Tibial artery (tissue), 4 donors: ENCODE measurements at regions of chr2 and their contacts with region 1.

Region 1: DNA sequence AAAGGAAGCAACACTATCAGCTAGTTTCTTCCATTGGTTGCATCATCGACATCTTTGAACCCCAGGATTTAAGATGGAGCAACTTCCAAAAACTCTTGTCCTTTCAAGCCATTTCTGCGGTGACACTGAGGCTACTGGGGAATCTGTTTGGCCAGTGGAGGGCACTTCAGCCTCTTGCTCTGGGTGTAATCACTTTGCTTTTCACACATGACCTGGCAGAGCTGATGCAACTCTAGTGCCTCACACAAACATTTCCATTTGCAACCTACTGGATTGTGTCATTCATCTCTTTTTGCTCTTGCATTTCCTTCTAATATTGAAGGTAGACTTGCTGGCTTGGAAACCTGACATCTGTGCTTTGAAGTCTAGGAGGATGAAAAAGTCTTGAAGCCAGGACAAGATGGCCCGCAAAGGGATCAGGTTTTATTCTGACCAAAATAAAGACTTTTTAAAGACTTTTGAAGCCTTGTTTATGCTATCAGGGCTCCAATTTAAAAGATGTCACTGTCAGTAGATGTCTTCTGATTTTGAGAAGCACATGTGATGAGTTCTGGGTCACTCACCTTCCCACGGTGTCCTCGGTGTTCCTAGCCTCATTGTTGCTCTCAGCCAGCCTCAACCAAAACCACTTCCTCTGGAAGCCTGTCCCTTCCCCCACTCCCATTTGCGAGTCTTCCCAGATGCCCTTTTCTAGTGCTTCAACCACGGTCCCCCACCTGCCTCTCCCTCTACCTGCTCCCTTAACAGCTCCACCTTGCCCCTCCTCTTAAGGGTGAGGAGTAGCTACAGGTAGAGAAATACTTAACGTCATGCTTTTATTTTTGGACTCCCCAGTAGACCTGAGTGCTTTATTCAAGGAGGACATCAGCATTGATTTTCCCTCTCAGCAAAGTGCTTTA is 69.7 kb upstream of the KCNE4 start:
- DNase-seq: peak; percentile 72 to 85
- H3K4me3 ChIP-seq: no peak overlapping the region
- H3K27ac ChIP-seq: peak overlapping the region in 1 of 2 donors; percentile 20
- H3K4me1 ChIP-seq: peaks cover 0 to 34% (median 10%) of the 10 kb centered on the region in 4 donors
- H3K27me3 ChIP-seq: no peaks in the 10 kb centered on the region
- CTCF ChIP-seq: peak; percentile 63 to 72

Region 2: GRCh38 chr2:221731443-221732145 is 1250.7 kb before region 1 on chr2:
- intact Hi-C with region 1: no loop called
- DNase-seq: no peak
- H3K4me3 ChIP-seq: no peak overlapping the region
- H3K27ac ChIP-seq: no peak overlapping the region
- H3K4me1 ChIP-seq: no peaks in the 10 kb centered on the region
- H3K27me3 ChIP-seq: no peaks in the 10 kb centered on the region
- CTCF ChIP-seq: no peak

Region 3: GRCh38 chr2:222494104-222494739 is 488.0 kb before region 1 on chr2:
- intact Hi-C with region 1: no loop called
- DNase-seq: no peak
- H3K4me3 ChIP-seq: no peak overlapping the region
- H3K27ac ChIP-seq: no peak overlapping the region
- H3K4me1 ChIP-seq: no peaks in the 10 kb centered on the region
- H3K27me3 ChIP-seq: no peaks in the 10 kb centered on the region
- CTCF ChIP-seq: no peak

Region 4: GRCh38 chr2:223096235-223096970 is 114.1 kb after region 1 on chr2:
- intact Hi-C with region 1: loop called (anchors 5 kb)
- DNase-seq: no peak
- H3K4me3 ChIP-seq: no peak overlapping the region
- H3K27ac ChIP-seq: no peak overlapping the region
- H3K4me1 ChIP-seq: peaks cover 0 to 40% (median 20%) of the 10 kb centered on the region in 4 donors
- H3K27me3 ChIP-seq: no peaks in the 10 kb centered on the region
- CTCF ChIP-seq: no peak